Body of pancreas (tissue), 4 donors: ENCODE measurements at regions of chr19 and their contacts with region 1.

Region 1: GRCh38 chr19:8132858-8133458 is 16.4 kb downstream of the FBN3 start:
- DNase-seq: no peak
- ATAC-seq: no peak
- H3K4me3 ChIP-seq: no peak overlapping the region
- H3K27ac ChIP-seq: no peak overlapping the region
- H3K4me1 ChIP-seq: no peaks in the 10 kb centered on the region
- H3K27me3 ChIP-seq: no peaks in the 10 kb centered on the region
- CTCF ChIP-seq: no peak
- POLR2A ChIP-seq: no peak

Region 2: GRCh38 chr19:7829561-7830271 is 303.2 kb before region 1 on chr19 and contains the start of gene EVI5L:
- intact Hi-C with region 1: no loop called
- DNase-seq: peak; percentile 99 to 100 (median 99)
- ATAC-seq: peak; percentile 92
- H3K4me3 ChIP-seq: peak within 1 kb of the TSS; percentile 51 to 77
- H3K27ac ChIP-seq: peak within 1 kb of the TSS in 3 of 4 donors; percentile 3 to 56 (median 51)
- H3K4me1 ChIP-seq: peaks cover 29% of the 10 kb centered on the region
- H3K27me3 ChIP-seq: no peaks in the 10 kb centered on the region
- CTCF ChIP-seq: no peak
- POLR2A ChIP-seq: no peak
- total RNA-seq, gene EVI5L: 6.0 to 12.9 TPM

Region 3: DNA sequence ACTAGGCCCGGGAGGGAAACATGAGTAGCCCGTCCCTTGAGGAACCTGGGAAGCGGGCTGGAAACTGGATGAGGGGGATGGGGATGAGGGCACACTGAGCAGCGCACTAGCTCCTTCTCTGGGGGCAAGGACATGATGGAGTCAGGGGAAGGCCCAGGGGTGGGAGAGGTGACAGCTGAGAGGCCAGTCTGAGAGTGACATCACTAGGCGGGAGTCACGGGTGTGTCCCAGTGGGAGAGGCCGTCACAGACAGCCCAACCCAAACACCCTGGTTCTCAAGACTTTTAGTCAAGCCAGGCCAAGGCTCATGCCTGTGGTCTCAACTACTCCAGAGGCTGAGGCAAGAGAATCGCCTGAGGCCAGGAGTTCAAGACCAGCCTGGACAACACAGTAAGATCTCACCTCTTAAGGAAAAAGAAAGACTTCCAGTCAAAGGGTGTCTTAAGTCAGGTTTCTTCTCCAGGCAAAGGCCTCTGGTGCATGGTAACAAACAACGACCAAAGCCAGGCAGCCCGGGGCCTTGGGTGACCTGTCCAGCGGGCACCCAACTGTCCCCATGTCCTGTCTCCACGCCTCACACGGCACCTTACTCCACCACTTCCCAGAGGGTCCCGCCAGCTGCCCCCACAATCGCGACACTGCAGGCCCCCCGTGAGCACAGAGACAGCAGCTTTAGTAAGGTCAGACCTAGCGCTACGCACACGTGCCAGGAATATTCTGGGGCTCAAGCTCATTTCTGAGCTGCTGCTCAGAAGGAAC is 164.0 kb before region 1 on chr19:
- intact Hi-C with region 1: loop called (anchors 10 kb)
- DNase-seq: no peak
- ATAC-seq: no peak
- H3K4me3 ChIP-seq: no peak overlapping the region
- H3K27ac ChIP-seq: no peak overlapping the region
- H3K4me1 ChIP-seq: no peaks in the 10 kb centered on the region
- H3K27me3 ChIP-seq: no peaks in the 10 kb centered on the region
- CTCF ChIP-seq: no peak
- POLR2A ChIP-seq: no peak